ENCODE measurements at regions of chr2 and their contacts with region 1.

Region 1: DNA sequence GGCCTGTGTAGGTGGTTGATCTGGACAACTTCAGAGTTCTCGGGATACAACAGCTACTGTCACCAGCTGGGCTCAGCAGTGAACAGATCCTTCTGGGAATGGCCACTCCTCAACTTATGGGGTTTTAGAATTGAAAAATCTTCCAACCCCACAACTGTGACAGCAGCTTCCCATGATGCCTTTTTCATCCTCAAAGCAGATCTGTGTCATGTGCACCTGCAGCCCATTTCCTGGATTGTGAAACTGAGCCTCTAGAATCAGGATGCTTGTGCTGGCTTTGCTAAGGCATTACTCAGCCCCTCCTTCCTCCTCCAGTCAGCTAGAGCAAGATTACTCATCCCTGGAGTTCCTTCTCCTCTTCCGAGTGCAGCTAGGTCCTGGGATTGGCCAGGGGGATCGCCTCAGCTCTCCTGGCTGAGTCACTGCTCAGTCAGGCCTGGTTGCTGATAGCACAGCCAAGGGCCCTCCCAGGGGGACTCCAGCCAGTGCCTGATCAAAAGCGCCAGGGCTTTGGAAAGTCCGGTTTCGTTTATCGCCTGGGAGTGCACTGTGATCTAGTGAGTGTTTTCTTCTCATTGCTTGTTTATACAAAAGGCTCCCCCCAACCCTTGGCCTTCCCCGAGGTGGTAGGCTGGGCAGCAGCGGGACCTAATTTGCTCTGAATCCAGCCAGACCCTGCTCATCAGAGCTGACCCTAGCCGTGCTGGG is 2.4 kb upstream of the LPIN1 start:
- DNase-seq: peak; percentile 94 to 99 (median 98)
- H3K4me3 ChIP-seq: peak overlapping the region in 1 of 4 donors; percentile 31
- H3K27ac ChIP-seq: peak overlapping the region in 4 of 5 donors; percentile 29 to 81 (median 73)
- H3K4me1 ChIP-seq: peaks cover 14 to 35% of the 10 kb centered on the region in 2 donors
- H3K27me3 ChIP-seq: no peaks in the 10 kb centered on the region
- CTCF ChIP-seq: no peak
- POLR2A ChIP-seq: no peak

Region 2: DNA sequence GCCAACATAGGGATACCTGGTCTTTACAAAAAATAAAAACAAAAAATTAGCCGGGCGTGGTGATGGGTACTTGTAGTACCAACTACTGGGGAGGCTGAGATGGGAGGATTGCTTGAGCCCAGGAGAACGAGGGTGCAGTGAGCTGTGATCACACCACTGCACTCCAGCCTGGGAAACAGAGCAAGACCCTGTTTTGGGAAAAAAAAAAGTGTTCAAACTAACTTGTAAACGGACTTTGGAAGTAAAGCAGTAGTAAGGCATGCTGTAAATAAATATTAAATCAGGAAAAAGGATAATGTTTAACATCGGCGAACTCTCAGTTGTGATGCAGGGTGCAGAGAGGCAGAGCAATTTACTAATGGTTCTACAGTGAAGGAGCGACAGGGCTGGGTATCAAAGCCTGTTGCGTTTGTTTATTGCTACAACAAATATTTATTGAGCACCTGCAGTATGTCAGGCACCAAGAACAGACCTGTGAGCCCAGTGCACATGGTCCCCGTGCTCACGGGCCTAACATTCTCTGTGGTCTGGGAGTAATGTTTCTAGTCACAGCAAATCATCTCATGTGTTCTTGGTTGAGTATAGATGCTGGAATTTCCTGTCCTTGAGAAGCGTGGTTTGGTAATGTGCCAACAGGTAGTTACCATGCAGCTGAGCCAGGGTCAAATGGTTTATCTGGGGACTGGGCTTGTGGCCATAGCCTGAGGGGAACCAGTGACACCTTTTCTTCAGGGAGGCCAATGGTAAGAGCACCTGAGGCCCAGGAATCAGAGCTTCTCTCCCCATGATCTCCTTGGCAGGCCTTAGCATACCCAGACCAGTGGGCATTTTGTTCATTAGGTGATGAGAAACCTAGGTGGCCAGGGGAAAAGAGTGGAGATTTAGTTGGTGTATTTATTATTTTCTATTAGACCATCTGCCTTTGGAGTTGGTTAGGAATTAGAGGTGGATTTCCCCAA is 238.1 kb before region 1 on chr2:
- intact Hi-C with region 1: no loop called
- DNase-seq: no peak
- H3K4me3 ChIP-seq: no peak overlapping the region
- H3K27ac ChIP-seq: no peak overlapping the region
- H3K4me1 ChIP-seq: no peaks in the 10 kb centered on the region
- H3K27me3 ChIP-seq: no peaks in the 10 kb centered on the region
- CTCF ChIP-seq: no peak
- POLR2A ChIP-seq: no peak

Region 3: GRCh38 chr2:11636593-11637362 is 107.2 kb before region 1 on chr2:
- intact Hi-C with region 1: no loop called
- DNase-seq: no peak
- H3K4me3 ChIP-seq: no peak overlapping the region
- H3K27ac ChIP-seq: no peak overlapping the region
- H3K4me1 ChIP-seq: no peaks in the 10 kb centered on the region
- H3K27me3 ChIP-seq: no peaks in the 10 kb centered on the region
- CTCF ChIP-seq: no peak
- POLR2A ChIP-seq: no peak

Region 4: DNA sequence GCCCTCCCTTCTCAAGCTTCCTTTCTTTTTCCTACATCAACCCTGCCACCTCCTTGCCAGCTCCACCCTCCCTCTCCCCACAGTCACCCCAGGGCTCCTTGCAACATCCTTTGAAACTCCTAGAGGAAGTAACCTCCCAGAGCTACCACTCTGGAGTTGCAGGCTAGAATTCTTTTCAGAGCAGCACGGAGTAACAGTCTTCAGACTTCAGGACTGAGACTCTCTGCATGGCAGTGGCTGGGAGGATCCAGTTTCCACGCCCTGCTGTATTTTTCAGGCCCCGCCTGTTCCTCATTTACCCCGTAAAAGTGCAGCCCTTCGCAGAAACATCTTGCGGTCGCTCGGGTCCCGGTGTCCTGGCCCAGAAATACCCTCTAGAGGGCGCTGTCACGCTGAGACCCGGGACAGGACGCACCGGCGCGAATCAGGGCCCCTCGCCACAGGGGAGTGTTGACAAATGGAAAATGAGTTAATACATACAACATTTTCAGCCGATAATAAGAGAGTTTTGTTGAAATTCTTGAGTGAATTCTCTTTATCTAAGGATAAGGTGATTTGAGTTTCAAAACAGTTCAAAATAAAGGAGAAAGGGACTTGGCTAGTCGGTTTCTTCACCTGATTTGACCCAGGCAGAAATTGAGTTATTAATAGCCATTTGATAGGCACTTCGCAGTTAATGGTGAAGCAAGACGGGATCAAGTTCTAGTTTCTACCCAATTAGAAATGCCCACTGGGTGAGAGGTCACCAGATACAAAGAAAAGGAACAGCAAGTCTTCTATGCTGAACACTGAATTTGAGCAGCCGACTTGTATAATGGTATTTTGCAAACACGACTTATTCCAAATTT is 55.6 kb before region 1 on chr2:
- intact Hi-C with region 1: loop called in 1 of 2 experiments (anchors 10 kb)
- DNase-seq: peak; percentile 81 to 94 (median 87)
- H3K4me3 ChIP-seq: peak overlapping the region in 1 of 4 donors; percentile 31
- H3K27ac ChIP-seq: peak overlapping the region in 2 of 5 donors; percentile 65 to 67
- H3K4me1 ChIP-seq: peaks cover 6 to 15% of the 10 kb centered on the region in 2 donors
- H3K27me3 ChIP-seq: no peaks in the 10 kb centered on the region
- CTCF ChIP-seq: peak; percentile 79 to 95 (median 88)
- POLR2A ChIP-seq: no peak

Region 5: DNA sequence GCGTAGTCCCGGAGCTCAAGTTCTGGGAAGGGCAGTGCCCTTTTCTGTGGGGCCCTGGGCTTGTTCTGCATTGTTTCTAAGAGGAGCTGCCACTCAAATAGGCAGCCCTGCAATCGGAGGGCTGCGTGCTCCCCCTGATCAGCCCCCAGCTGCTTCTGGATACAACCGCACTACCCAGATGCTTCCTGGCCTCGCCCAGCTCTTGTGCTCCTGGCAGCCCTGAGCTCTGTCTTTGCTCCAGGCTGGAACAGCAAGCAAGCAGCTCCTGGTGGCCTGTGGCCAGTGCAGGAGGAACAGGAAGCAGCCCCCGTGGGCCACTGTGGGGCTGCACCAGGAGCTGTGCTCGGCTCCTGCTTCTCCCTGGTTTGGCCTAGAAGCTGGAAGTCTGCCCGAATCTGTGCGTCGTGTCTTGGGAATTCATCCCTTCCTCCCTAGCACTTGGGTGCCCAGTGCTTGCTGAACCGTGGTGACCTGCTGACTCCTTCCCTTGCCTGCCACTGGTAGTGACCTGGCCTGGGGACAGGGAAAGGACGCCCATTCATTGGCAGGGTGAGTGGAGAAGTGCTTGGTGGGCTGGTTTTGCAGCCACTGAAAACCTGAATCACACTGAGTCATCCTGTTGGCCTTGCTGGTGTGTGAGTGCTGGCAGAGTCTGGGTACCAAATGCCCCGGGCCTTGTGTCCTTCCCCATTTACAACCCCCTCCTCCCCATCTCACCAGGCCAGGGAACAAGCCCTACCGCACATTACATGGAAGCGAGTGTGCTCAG is 46.7 kb before region 1 on chr2:
- intact Hi-C with region 1: loop called (anchors 5 to 10 kb)
- DNase-seq: peak in 2 of 7 donors; percentile 59 to 61
- H3K4me3 ChIP-seq: no peak overlapping the region
- H3K27ac ChIP-seq: peak overlapping the region in 2 of 5 donors; percentile 78 to 85
- H3K4me1 ChIP-seq: peaks cover 0 to 21% of the 10 kb centered on the region in 2 donors
- H3K27me3 ChIP-seq: no peaks in the 10 kb centered on the region
- CTCF ChIP-seq: no peak
- POLR2A ChIP-seq: no peak

Region 6: GRCh38 chr2:11778923-11779757 is 35.1 kb after region 1 on chr2:
- intact Hi-C with region 1: loop called in 1 of 2 experiments (anchors 5 kb)
- DNase-seq: peak; percentile 70 to 89 (median 80)
- H3K4me3 ChIP-seq: no peak overlapping the region
- H3K27ac ChIP-seq: no peak overlapping the region
- H3K4me1 ChIP-seq: peaks cover 0 to 14% of the 10 kb centered on the region in 2 donors
- H3K27me3 ChIP-seq: no peaks in the 10 kb centered on the region
- CTCF ChIP-seq: peak; percentile 95 to 99 (median 97)
- POLR2A ChIP-seq: no peak

Measured in adrenal gland (tissue), 19 donors.